Endothelial cell of umbilical vein (primary cell): ENCODE measurements at regions of chr14 and their contacts with region 1.

Region 1: GRCh38 chr14:74478996-74479635 is 14.0 kb downstream of the NPC2 start:
- DNase-seq: peak; percentile 67
- H3K4me3 ChIP-seq: no peak overlapping the region
- H3K27ac ChIP-seq: no peak overlapping the region
- H3K4me1 ChIP-seq: peaks cover 5% of the 10 kb centered on the region
- H3K27me3 ChIP-seq: no peaks in the 10 kb centered on the region
- CTCF ChIP-seq: peak; percentile 77 to 78
- POLR2A ChIP-seq: no peak

Region 2: GRCh38 chr14:74207947-74208346 is 271.2 kb before region 1 on chr14:
- CTCF ChIA-PET with region 1: no interaction called
- POLR2A ChIA-PET with region 1: no interaction called
- dilution Hi-C with region 1: no loop called
- intact Hi-C with region 1: loop called (anchors 1 kb)
- DNase-seq: no peak
- H3K4me3 ChIP-seq: no peak overlapping the region
- H3K27ac ChIP-seq: no peak overlapping the region
- H3K4me1 ChIP-seq: no peaks in the 10 kb centered on the region
- H3K27me3 ChIP-seq: peaks cover 3 to 4% of the 10 kb centered on the region in 2 experiments
- CTCF ChIP-seq: peak in 1 of 2 donors; percentile 10
- POLR2A ChIP-seq: no peak

Region 3: GRCh38 chr14:74324931-74325361 is 154.2 kb before region 1 on chr14:
- CTCF ChIA-PET with region 1: interaction called, 15 read pairs
- POLR2A ChIA-PET with region 1: no interaction called
- dilution Hi-C with region 1: no loop called
- intact Hi-C with region 1: loop called (anchors 1 kb)
- DNase-seq: peak; percentile 37
- H3K4me3 ChIP-seq: no peak overlapping the region
- H3K27ac ChIP-seq: no peak overlapping the region
- H3K4me1 ChIP-seq: no peaks in the 10 kb centered on the region
- H3K27me3 ChIP-seq: peaks cover 6 to 11% of the 10 kb centered on the region in 2 experiments
- CTCF ChIP-seq: peak; percentile 57 to 58
- POLR2A ChIP-seq: no peak

Region 4: GRCh38 chr14:74346341-74346740 is 132.8 kb before region 1 on chr14:
- CTCF ChIA-PET with region 1: interaction called, 10 read pairs
- POLR2A ChIA-PET with region 1: no interaction called
- dilution Hi-C with region 1: no loop called
- intact Hi-C with region 1: no loop called
- DNase-seq: no peak
- H3K4me3 ChIP-seq: no peak overlapping the region
- H3K27ac ChIP-seq: no peak overlapping the region
- H3K4me1 ChIP-seq: no peaks in the 10 kb centered on the region
- H3K27me3 ChIP-seq: peaks cover 38 to 40% of the 10 kb centered on the region in 2 experiments
- CTCF ChIP-seq: no peak
- POLR2A ChIP-seq: no peak

Region 5: DNA sequence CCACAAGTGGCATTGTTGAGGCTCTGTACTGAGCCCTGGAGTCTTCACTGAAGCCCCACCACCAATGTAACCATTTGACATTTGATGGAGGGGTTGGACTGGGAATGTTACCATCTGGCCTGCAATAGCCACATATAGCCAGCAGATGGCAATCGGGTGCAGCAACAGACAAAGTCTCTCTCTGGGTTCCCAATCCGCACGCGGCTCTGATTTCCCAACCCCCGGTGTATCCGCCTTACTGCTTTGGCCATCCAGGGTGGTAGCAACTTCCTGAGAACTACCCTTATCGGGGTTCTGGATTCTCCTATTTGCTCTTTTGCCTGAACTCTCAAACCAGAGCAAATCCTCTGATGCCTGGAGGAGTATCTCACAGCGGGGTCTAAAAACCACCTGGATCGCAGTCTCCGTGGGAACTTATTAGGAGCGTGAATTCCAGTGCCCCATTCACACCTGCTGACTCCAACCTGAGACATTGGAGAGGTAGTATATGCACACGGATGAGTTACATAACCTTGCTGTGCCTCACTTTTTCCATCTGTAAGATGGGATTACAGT is 116.7 kb before region 1 on chr14:
- CTCF ChIA-PET with region 1: interaction called, 55 read pairs
- POLR2A ChIA-PET with region 1: interaction called, 6 read pairs
- dilution Hi-C with region 1: no loop called
- intact Hi-C with region 1: loop called (anchors 1 kb)
- DNase-seq: peak; percentile 68
- H3K4me3 ChIP-seq: no peak overlapping the region
- H3K27ac ChIP-seq: no peak overlapping the region
- H3K4me1 ChIP-seq: no peaks in the 10 kb centered on the region
- H3K27me3 ChIP-seq: peaks cover 2 to 3% of the 10 kb centered on the region in 2 experiments
- CTCF ChIP-seq: peak; percentile 90 to 93
- POLR2A ChIP-seq: no peak

Region 6: GRCh38 chr14:74459289-74459946 is 19.7 kb before region 1 on chr14:
- CTCF ChIA-PET with region 1: interaction called, 43 read pairs
- POLR2A ChIA-PET with region 1: no interaction called
- dilution Hi-C with region 1: no loop called
- intact Hi-C with region 1: loop called (anchors 1 kb)
- DNase-seq: peak; percentile 49
- H3K4me3 ChIP-seq: no peak overlapping the region
- H3K27ac ChIP-seq: no peak overlapping the region
- H3K4me1 ChIP-seq: peaks cover 8% of the 10 kb centered on the region
- H3K27me3 ChIP-seq: no peaks in the 10 kb centered on the region
- CTCF ChIP-seq: peak; percentile 73 to 81
- POLR2A ChIP-seq: no peak